Right cardiac atrium (tissue), 5 donors: ENCODE measurements at regions of chr1 and their contacts with region 1.

Region 1: GRCh38 chr1:180092931-180093559 is 61.6 kb upstream of the QSOX1 start:
- DNase-seq: no peak
- ATAC-seq: no peak
- H3K4me3 ChIP-seq: no peak overlapping the region
- H3K27ac ChIP-seq: no peak overlapping the region
- H3K4me1 ChIP-seq: no peaks in the 10 kb centered on the region
- H3K27me3 ChIP-seq: no peaks in the 10 kb centered on the region

Region 2: GRCh38 chr1:180027949-180028445 is 65.0 kb before region 1 on chr1:
- intact Hi-C with region 1: no loop called
- DNase-seq: no peak
- ATAC-seq: no peak
- H3K4me3 ChIP-seq: no peak overlapping the region
- H3K27ac ChIP-seq: no peak overlapping the region
- H3K4me1 ChIP-seq: no peaks in the 10 kb centered on the region
- H3K27me3 ChIP-seq: no peaks in the 10 kb centered on the region

Region 3: GRCh38 chr1:180040034-180040433 is 53.0 kb before region 1 on chr1:
- intact Hi-C with region 1: loop called in 1 of 4 experiments (anchors 10 kb)
- DNase-seq: no peak
- ATAC-seq: no peak
- H3K4me3 ChIP-seq: no peak overlapping the region
- H3K27ac ChIP-seq: no peak overlapping the region
- H3K4me1 ChIP-seq: no peaks in the 10 kb centered on the region
- H3K27me3 ChIP-seq: no peaks in the 10 kb centered on the region